Esophagus muscularis mucosa (tissue), 4 donors: ENCODE measurements at regions of chr12 and their contacts with region 1.

Region 1: DNA sequence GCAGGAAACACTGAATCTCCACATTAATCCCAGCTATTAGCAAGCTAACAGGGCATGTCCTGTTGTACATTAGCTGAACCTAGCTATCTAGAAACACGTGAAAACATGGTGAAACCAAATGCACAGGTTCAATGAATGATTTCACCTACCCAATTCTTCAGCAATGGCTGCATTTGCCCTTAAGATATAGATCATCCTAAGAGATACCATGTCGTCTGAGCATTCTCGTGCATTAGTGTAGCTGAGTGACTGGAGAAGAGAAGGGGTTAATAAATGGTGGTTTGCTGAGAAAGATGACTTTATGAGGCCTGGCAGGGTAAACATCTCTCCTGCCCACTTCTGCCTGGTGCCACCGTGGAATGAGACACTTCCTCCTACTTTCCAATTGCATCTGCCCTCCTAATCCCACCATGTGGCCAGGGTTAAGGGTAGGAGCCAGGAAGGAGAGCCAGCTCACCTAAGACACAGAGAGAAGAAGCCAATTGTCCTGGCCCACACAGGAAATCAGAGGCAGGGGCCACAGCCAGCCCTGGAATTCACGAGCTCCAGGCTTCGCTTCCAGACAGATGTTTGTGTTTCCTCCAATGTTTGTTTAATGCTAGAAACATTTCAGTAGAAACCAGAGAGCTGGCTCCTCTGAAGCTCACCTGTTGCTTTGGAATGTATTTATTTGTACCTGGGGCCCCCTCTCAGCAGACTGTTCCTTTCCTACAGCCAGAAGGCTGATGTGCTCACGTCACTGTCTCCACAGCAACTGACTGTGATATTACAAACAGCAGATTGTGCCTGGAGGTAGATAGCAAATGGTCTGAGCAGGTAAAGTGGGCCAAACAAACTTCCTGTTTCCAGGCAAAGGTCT is 126.0 kb upstream of the PARP11 start:
- DNase-seq: no peak
- H3K4me3 ChIP-seq: no peak overlapping the region
- H3K27ac ChIP-seq: no peak overlapping the region
- H3K4me1 ChIP-seq: no peaks in the 10 kb centered on the region
- H3K27me3 ChIP-seq: peaks cover 0 to 5% (median 0%) of the 10 kb centered on the region in 4 donors
- CTCF ChIP-seq: no peak
- EP300 ChIP-seq: no peak
- POLR2A ChIP-seq: no peak

Region 2: GRCh38 chr12:4037747-4038312 is 38.6 kb after region 1 on chr12:
- intact Hi-C with region 1: loop called (anchors 2 kb)
- DNase-seq: no peak
- H3K4me3 ChIP-seq: no peak overlapping the region
- H3K27ac ChIP-seq: no peak overlapping the region
- H3K4me1 ChIP-seq: no peaks in the 10 kb centered on the region
- H3K27me3 ChIP-seq: peaks cover 0 to 5% (median 0%) of the 10 kb centered on the region in 4 donors
- CTCF ChIP-seq: peak; percentile 69 to 79 (median 77)
- EP300 ChIP-seq: no peak
- POLR2A ChIP-seq: no peak